GM10248 (cell line): ENCODE measurements at regions of chr5 and their contacts with region 1.

Region 1: DNA sequence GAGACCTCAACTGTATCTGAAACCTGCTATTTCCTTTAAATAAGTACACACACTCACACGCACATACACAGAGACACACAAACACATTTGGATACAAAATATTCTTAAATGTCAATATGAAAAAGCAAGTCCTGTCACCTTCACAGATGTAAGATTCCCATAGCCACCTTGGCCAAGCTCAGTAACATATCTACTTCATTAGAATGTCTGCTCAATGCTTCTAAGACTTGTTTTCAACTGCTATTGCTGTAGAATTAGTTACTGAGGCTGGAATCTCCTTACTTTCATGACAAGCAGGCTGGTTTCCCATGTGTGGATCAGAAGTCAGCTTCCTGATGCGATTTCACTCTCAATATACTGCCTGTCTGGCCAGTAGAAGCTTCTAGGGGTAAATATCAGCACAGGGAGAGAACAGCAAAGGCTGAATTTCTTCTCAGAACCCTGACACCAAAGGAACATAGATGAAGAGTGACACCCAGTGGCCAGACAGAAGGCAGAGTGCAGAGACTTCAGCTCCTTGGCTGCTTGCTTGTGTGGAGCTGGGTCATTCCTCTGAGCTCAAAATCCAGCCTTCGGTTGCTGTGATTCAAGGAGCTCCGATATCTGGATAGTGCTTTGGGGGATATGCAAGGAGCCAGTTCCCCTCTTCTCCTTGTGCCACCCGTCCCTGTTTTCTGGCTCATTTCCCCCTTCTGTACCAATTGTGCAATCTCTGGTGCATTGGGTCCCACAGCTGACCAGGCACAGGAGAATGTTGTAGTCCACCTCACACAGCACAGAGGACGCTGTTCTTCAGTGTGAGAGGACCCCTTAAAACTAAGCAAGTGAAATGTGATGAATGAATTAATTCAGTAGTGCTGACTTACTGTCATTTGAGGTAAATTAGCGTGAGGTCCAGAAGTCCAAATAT is 26.6 kb upstream of the ABLIM3 start:
- DNase-seq: peak; percentile 29
- CTCF ChIP-seq: peak; percentile 78

Region 2: DNA sequence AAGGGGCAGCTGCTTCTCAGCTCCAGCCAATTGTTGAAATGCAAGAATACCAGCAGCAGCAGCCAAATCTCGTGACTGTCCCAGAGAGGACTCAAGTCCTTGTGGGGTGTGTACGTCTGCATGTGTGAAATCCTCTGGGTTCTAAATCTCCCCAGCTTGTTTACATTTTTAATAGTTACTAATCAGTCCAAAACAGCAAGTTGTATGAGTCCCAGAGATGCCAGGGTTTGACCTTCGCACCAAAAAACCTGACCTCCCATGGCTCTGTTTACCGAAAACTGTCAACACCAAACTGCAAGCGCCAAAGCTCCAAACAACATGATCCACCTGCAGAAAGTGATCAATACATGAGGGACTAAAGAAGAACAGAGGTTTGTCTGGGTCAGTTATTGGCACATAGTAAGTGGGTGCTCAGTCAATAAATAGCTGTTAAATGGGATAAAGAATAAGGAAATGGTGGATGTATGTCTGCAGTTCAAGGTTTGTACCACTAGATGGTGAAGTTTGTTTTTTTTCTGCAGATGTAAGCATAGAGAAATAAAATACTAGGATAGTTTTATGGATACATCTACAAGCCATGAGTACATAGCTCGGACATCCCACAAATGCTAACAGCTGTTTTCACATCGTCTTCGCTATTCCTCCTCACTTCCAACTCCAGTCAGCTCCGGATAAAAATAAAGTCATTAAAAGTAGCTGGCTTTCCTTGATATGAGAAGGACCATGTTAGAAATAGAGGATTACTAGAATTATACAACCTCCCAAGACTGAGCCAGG is 373.5 kb before region 1 on chr5:
- CTCF ChIA-PET with region 1: interaction called, 11 read pairs
- POLR2A ChIA-PET with region 1: no interaction called
- DNase-seq: peak; percentile 38
- CTCF ChIP-seq: peak; percentile 47